GM12878 (cell line): ENCODE measurements at regions of chr7 and their contacts with region 1.

Region 1: DNA sequence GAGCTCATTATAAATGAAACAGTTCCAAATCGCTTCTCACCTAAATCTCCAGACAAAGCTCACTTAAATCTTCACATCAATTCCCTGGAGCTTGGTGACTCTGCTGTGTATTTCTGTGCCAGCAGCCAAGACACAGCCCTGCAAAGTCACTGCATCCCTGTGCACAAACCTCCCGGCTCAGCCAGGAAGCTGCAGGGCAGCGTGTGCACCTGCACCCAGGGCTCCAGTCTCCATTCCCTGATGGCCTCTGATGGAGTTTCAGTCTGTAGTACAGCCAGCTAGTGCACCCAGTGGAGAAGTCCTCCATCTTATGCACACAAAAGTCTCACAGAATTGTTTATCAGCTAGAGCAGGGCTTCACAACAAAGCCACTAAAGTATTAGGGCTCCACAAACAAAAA is 51.1 kb upstream of the PRSS58 start:
- DNase-seq: no peak
- ATAC-seq: no peak
- H3K4me3 ChIP-seq: no peak overlapping the region
- H3K27ac ChIP-seq: no peak overlapping the region
- H3K4me1 ChIP-seq: no peaks in the 10 kb centered on the region
- H3K27me3 ChIP-seq: peaks cover 2% of the 10 kb centered on the region in 2 experiments; a peak in 2 of 4 replicates
- CTCF ChIP-seq: no peak
- EP300 ChIP-seq: no peak
- POLR2A ChIP-seq: no peak
- RAD21 ChIP-seq: no peak

Region 2: DNA sequence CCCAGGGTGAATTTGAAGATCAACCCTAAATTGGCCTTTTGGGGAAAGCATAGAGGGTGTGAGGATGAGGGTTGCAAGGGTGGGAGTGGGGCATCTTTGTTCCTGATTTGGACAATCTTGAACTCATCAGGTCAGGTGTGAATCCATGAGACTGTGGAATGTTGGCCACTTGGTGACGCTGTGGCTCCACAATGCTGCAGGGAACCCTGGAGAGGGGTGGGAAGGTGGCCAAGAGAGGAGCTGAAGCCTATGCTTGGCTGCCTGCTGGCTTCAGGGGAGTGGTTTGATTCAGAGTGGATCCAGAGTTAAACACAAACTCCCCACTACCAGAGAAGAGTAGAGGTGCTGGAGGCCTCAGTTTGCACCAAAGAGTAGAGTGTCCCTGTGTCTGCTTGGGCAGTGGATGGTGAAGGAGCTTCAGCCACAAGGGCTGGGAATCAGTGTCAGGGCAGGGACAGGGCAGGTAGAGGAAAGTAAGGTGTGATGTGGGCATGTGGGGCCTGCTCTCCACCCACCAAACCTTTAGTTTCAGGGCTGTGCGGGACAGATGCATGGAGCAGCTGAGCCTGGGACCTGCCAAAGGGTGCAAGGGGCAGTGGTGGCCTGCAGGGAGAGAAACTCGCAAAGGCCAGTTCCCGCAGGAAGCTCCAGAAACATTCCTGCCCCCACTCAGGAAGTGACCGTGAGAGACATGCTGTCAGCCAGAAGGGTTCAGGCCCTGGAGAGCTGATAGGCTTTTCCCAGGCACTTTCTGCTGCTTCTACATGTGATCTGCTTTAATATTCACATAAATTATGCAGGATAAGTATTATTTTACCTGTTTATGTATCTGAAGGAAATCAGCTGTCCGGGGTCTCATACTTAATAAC is 29.9 kb after region 1 on chr7:
- CTCF ChIA-PET with region 1: no interaction called
- POLR2A ChIA-PET with region 1: no interaction called
- RAD21 ChIA-PET with region 1: no interaction called
- SMC1A ChIA-PET with region 1: no interaction called
- in situ Hi-C with region 1: no loop called
- intact Hi-C with region 1: loop called (anchors 1 kb)
- DNase-seq: no peak
- ATAC-seq: no peak
- H3K4me3 ChIP-seq: no peak overlapping the region
- H3K27ac ChIP-seq: no peak overlapping the region
- H3K4me1 ChIP-seq: no peaks in the 10 kb centered on the region
- H3K27me3 ChIP-seq: peaks cover 0 to 7% of the 10 kb centered on the region in 2 experiments; a peak in 3 of 4 replicates
- CTCF ChIP-seq: no peak; a peak in 1 of 6 replicates
- EP300 ChIP-seq: no peak
- POLR2A ChIP-seq: no peak
- RAD21 ChIP-seq: no peak

Region 3: GRCh38 chr7:142445019-142445686 is 136.2 kb after region 1 on chr7:
- CTCF ChIA-PET with region 1: no interaction called
- POLR2A ChIA-PET with region 1: no interaction called
- RAD21 ChIA-PET with region 1: no interaction called
- SMC1A ChIA-PET with region 1: no interaction called
- in situ Hi-C with region 1: no loop called
- intact Hi-C with region 1: no loop called
- DNase-seq: no peak
- ATAC-seq: peak; percentile 51; the same call in 2 of the 3 replicates
- H3K4me3 ChIP-seq: no peak overlapping the region
- H3K27ac ChIP-seq: no peak overlapping the region
- H3K4me1 ChIP-seq: peaks cover 5% of the 10 kb centered on the region
- H3K27me3 ChIP-seq: no peaks in the 10 kb centered on the region; a peak in 1 of 4 replicates
- CTCF ChIP-seq: peak in 2 of 3 experiments; percentile 25 to 31; a peak in 2 of 6 replicates
- EP300 ChIP-seq: no peak
- POLR2A ChIP-seq: no peak
- RAD21 ChIP-seq: no peak

Region 4: DNA sequence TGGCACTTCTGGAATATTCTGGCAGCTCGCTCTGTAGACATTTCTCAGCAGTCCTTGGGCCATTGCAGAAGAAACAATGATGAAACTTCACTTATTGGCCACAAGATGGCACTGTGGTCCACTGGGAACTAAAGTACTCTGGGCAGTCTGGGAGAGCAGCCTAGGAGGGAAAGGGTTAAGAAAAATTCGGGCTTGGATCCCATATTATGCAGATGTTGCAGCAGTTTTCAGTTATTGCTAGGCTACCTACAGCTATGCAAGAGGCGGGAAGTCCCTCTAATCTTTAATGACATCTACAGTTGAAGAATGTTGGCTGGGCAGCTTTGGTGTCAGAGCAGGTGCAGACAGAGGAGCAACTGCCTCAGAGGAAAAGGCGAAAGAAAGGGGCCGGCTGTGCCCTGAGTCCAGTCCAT is 150.6 kb after region 1 on chr7:
- CTCF ChIA-PET with region 1: no interaction called
- POLR2A ChIA-PET with region 1: no interaction called
- RAD21 ChIA-PET with region 1: no interaction called
- SMC1A ChIA-PET with region 1: no interaction called
- in situ Hi-C with region 1: no loop called
- intact Hi-C with region 1: no loop called
- DNase-seq: no peak
- ATAC-seq: peak; percentile 95
- H3K4me3 ChIP-seq: no peak overlapping the region
- H3K27ac ChIP-seq: no peak overlapping the region
- H3K4me1 ChIP-seq: no peaks in the 10 kb centered on the region
- H3K27me3 ChIP-seq: peaks cover 0 to 2% of the 10 kb centered on the region in 2 experiments; a peak in 1 of 4 replicates
- CTCF ChIP-seq: peak; percentile 61 to 73 (median 64)
- EP300 ChIP-seq: no peak
- POLR2A ChIP-seq: no peak
- RAD21 ChIP-seq: peak; percentile 62